Activated naive CD8-positive, alpha-beta T cell treated with anti-CD3 and anti-CD28 coated beads, Interleukin-2, amount 10 ng/mL, durations not matched to agents 7 days and 5 days (primary cell): ENCODE measurements at regions of chr11 and their contacts with region 1.

Region 1: DNA sequence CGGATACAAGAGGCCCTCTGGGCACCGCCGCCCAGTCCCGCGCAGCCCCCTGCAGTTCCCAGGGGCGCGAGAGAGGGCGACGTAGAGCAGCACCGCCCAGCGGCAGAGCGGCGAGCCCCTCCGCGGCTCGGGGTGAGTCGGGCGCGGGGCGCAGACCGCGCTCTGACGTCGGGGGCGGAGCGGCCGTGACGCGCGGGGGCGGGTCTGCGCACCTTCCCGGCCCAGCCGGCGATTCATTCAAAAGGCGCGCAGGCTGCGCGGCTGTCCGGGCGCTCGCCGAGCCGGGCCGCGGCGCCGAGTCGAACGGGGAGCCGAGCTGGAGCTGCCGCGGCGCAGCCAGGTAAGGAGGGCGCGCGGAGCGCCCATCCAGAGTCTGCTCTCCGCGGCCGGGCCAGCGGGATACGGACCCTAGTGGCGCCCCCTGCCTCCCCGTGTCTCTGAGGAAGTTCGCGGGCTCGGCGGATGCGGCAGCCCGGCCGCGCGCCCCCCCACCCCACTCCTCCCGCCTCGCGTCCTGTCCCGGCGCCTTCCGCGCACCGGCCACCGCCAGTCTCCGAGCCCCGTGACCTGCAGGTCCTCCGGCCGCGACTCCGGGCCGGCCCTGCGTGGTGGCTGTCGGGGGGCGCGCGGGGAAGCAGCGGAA is at the start of gene RELT:
- DNase-seq: peak; percentile 99
- ATAC-seq: peak; percentile 79
- H3K4me3 Mint-ChIP-seq: peak within 1 kb of the TSS; percentile 93
- H3K27ac Mint-ChIP-seq: peak within 1 kb of the TSS; percentile 91
- H3K4me1 Mint-ChIP-seq: peaks cover 38% of the 10 kb centered on the region
- H3K27me3 Mint-ChIP-seq: no peaks in the 10 kb centered on the region
- total RNA-seq, gene RELT: 26.2 to 28.4 TPM

Region 2: DNA sequence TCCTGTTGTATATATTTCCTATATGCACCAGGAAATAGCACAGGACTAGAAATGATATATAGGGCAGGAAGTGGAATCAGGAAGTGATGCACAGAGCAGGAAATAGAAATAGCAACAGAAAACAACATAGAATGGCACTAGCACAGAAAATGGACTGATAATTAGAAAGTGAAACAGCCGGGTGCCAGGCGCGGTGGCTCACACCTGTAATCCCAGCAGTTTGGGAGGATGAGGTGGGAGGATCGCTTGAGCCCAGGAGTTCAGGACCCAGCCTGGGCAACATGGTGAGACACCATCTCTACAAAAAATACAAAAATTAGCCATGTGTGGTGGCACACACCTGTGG is 10.0 kb before region 1 on chr11:
- POLR2A ChIA-PET with region 1: interaction called, 10 read pairs
- DNase-seq: no peak
- ATAC-seq: peak; percentile 85
- H3K4me3 Mint-ChIP-seq: peak overlapping the region; percentile 26
- H3K27ac Mint-ChIP-seq: peak overlapping the region; percentile 85
- H3K4me1 Mint-ChIP-seq: peaks cover 17% of the 10 kb centered on the region
- H3K27me3 Mint-ChIP-seq: no peaks in the 10 kb centered on the region